ENCODE measurements at regions of chr1 and their contacts with region 1.

Region 1: GRCh38 chr1:39901698-39902459 is at the start of gene MYCL:
- DNase-seq: peak; percentile 91
- H3K4me3 ChIP-seq: peak within 1 kb of the TSS; percentile 60
- H3K27ac ChIP-seq: peak within 1 kb of the TSS; percentile 74
- H3K4me1 ChIP-seq: peaks cover 4% of the 10 kb centered on the region
- H3K27me3 ChIP-seq: no peaks in the 10 kb centered on the region
- CTCF ChIP-seq: peak; percentile 64
- total RNA-seq, gene MYCL: 16.4 to 17.0 TPM

Region 2: DNA sequence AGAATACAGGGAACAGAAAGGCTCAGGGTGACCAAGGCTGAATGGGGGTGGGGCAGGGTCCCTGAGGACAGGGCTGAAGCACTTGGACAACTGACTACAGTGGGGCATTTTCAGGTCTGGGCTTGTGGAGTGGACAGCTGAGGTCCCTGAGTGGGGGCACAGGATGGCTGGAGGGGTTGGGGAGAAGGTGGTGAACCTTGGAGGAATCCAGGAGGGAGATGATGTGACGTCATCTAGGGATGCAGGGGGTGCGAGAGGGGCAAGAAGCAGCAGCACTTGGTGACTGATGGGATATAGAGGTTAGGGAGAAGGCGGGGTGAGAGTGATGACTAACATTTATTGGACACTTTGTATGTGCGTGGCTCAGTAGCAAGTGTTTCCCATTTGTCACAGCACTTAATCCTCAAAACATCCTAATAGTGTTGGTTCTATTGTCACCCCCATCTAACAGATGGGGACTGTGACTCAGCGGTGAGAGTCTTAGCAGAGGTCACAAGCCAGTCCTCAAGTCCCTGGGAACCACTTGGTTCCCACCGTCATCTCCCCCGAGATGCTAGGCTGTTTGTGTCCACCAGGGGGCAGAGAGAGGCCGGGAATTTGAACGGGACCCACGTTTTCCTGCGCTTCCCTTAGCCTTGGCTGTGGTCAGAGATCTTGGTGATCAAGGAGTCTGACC is 85.3 kb before region 1 on chr1:
- intact Hi-C with region 1: loop called (anchors 1 kb)
- DNase-seq: peak; percentile 82
- H3K4me3 ChIP-seq: no peak overlapping the region
- H3K27ac ChIP-seq: no peak overlapping the region
- H3K4me1 ChIP-seq: peaks cover 12% of the 10 kb centered on the region
- H3K27me3 ChIP-seq: no peaks in the 10 kb centered on the region
- CTCF ChIP-seq: peak; percentile 69

Measured in colonic mucosa (tissue), 4 donors.